Activated naive CD4-positive, alpha-beta T cell treated with anti-CD3 and anti-CD28 coated beads, Interleukin-2, amount 10 ng/mL, durations not matched to agents 7 days and 5 days (primary cell): ENCODE measurements at regions of chr2 and their contacts with region 1.

Region 1: GRCh38 chr2:239267288-239267951 is 133.4 kb downstream of the HDAC4 start:
- DNase-seq: peak; percentile 96
- H3K4me3 Mint-ChIP-seq: peak overlapping the region; percentile 98
- H3K27ac Mint-ChIP-seq: peak overlapping the region; percentile 98
- H3K4me1 Mint-ChIP-seq: peaks cover 90% of the 10 kb centered on the region
- H3K27me3 Mint-ChIP-seq: no peaks in the 10 kb centered on the region

Region 2: GRCh38 chr2:238700117-238700457 is 567.3 kb before region 1 on chr2:
- CTCF ChIA-PET with region 1: no interaction called
- DNase-seq: no peak
- H3K4me3 Mint-ChIP-seq: no peak overlapping the region
- H3K27ac Mint-ChIP-seq: no peak overlapping the region
- H3K4me1 Mint-ChIP-seq: no peaks in the 10 kb centered on the region
- H3K27me3 Mint-ChIP-seq: peaks cover 5% of the 10 kb centered on the region

Region 3: DNA sequence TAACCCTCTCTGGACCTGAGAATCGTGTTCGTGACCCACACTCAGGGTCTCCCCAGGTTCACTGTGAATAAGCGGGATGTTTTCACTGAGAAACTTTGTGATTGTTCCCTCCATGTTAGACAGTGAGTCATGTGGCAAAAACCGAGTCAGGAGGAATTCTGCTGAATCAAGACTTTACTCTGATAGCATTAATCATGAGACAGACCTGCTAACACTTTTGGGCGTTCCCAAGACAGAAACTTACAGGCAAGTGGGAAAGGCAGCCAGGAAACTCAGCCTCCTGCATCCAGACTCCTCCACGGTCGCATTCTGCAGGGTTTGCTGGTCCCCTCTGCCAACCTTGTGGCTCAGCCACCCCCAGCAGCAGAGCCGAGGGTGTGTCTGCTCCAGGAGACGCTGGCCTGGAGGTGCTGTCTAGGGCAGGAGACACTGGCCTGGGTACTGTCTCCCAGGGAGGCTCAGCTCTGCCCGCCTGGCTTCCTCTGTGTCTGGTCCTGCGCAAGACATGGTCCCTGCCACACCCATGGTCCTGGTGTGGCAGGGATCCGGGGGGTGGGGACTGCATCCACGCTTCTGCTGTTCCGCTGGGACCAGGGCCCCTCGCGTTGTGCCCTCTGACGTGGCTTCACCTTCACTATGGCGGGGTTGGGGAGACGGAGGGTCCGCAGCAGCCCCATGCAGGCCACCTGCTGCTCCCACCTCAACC is 242.2 kb before region 1 on chr2:
- CTCF ChIA-PET with region 1: no interaction called
- DNase-seq: no peak
- H3K4me3 Mint-ChIP-seq: no peak overlapping the region
- H3K27ac Mint-ChIP-seq: no peak overlapping the region
- H3K4me1 Mint-ChIP-seq: no peaks in the 10 kb centered on the region
- H3K27me3 Mint-ChIP-seq: peaks cover 34% of the 10 kb centered on the region

Region 4: DNA sequence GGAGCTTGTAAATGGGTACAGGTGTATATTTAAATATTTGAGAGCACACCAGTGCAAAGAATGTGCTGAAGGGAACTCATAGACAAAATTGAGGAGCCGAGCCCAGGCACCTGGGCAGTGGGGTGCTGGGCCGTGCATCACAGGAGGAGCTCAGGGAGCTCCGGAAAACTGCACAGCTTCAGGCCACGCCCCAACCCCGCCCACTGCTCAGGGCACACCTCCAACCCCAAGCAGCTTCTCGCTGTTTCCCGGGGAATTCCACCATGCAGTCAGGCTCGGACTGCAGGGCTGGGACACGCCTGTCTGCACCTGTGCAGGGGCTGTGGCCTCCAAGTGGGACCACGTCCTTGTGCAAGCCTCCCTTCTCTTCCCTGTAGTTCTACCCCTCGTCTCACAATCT is 109.6 kb before region 1 on chr2:
- CTCF ChIA-PET with region 1: no interaction called
- DNase-seq: peak; percentile 4
- H3K4me3 Mint-ChIP-seq: no peak overlapping the region
- H3K27ac Mint-ChIP-seq: no peak overlapping the region
- H3K4me1 Mint-ChIP-seq: peaks cover 2% of the 10 kb centered on the region
- H3K27me3 Mint-ChIP-seq: no peaks in the 10 kb centered on the region

Region 5: DNA sequence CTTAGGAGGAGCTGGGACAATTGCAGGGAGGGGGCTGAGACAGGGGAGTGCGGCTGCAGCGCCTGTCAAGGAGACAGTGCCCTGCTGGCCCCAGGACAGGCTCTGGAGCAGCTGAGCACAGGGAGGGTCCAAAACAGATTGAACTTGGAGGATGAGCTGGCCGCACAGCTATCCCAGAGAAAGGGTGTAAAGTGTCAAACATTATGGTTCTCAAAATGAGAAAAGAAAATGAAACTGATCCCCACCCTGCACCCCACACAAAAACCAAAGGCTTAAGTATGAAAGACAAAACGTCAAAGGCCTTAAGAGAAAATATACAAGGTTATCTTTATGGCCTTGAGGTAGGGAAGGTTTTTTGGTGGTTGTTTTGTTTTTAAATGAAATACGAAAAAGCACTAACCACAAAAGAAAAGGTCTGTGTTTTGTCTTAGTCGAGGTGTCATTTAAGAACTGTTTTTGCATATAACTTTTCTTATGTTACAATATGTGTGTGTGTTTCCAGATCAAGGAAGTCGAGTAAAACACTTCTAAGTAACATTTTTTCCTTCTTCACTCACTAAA is 21.6 kb after region 1 on chr2:
- CTCF ChIA-PET with region 1: interaction called, 13 read pairs
- DNase-seq: peak; percentile 69
- H3K4me3 Mint-ChIP-seq: peak overlapping the region; percentile 68
- H3K27ac Mint-ChIP-seq: peak overlapping the region; percentile 100
- H3K4me1 Mint-ChIP-seq: peaks cover 94% of the 10 kb centered on the region
- H3K27me3 Mint-ChIP-seq: peaks cover 3% of the 10 kb centered on the region

Region 6: GRCh38 chr2:239303711-239304532 is 36.5 kb after region 1 on chr2:
- CTCF ChIA-PET with region 1: interaction called, 13 read pairs
- DNase-seq: no peak
- H3K4me3 Mint-ChIP-seq: no peak overlapping the region
- H3K27ac Mint-ChIP-seq: no peak overlapping the region
- H3K4me1 Mint-ChIP-seq: peaks cover 47% of the 10 kb centered on the region
- H3K27me3 Mint-ChIP-seq: peaks cover 7% of the 10 kb centered on the region

Region 7: DNA sequence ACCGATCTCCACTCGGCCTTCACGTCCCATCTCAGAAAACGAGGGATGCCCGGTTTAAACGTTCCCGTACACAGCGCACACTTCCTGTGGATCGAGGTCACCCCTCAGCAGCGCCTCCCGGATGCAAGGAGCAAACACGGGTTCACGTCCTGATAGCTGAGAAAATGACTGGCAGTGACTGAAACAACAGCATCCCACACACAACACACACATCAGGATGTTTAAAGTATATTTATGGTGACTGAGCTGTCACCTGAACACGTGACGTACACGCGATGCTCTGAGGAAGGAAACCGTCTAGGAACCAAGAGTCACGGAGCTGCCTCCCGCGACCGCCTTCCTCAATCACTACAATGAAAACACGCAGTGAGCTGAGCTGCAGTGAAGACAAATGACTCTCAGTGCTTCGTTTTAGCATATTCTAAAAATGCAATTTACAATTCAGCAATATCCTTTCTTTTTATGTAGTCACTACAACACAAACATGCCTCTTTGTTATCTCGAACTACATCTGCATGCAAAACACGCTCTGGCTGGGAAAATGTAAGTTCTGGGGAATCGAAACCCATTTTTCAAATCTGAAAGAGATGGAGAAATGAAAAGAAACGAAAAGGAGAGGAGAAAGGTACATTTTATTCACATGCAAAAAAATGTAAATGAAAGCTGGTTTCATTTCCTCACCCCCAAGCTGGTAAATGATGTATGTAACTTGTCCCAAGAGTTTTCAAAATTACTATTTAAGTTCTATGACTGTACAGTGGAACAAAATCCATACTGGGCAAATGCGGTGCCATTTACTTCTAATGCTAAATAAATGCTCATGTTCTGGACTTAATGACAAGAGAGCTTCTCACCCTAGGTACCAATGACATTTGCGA is 113.7 kb after region 1 on chr2:
- CTCF ChIA-PET with region 1: interaction called, 12 read pairs
- DNase-seq: peak; percentile 80
- H3K4me3 Mint-ChIP-seq: peak overlapping the region; percentile 71
- H3K27ac Mint-ChIP-seq: peak overlapping the region; percentile 98
- H3K4me1 Mint-ChIP-seq: peaks cover 35% of the 10 kb centered on the region
- H3K27me3 Mint-ChIP-seq: no peaks in the 10 kb centered on the region